Right ventricle myocardium inferior (tissue), 1 donor: ENCODE measurements at regions of chr7 and their contacts with region 1.

Region 1: GRCh38 chr7:141533149-141533949 is 17.9 kb upstream of the AGK start:
- DNase-seq: no peak
- ATAC-seq: peak; percentile 79

Region 2: DNA sequence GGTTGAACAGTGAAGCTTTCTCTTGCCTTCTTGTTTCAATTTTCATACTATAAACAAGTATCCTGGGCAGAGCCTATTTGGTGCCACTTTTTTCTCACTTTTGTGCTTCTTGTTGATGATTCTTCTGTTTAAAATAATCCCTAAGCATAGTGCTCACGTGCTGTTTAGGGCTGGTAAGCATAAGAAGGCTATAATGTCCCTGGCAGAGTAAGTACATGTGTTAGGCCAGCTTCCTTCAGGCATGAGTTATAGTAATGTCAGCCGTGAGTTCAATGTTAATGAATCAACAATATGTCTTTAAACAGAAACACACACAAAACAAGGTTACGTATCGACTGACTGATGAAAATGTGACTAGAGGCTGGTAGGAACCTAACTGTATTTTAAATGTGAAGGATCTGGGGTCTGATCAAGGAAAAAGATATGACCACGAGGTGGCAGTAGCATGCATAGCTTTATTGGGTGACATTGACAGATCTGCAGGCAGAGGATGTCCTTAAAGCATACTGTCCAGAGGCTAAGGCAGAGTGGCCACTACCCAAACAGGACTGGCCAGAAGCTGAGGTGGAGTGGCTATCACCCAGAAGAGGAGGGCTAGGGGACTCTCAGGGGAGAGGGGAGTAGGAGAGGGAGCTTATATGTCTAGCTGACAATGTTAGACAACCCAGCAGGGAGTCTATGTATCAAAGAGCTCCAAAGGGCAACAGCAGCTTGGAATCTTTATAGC is 722.4 kb before region 1 on chr7:
- intact Hi-C with region 1: loop called (anchors 5 kb)
- DNase-seq: no peak
- ATAC-seq: peak; percentile 91

Region 3: GRCh38 chr7:141072548-141073172 is 460.7 kb before region 1 on chr7:
- intact Hi-C with region 1: loop called (anchors 5 kb)
- DNase-seq: peak; percentile 73
- ATAC-seq: peak; percentile 67

Region 4: GRCh38 chr7:141288648-141289047 is 244.7 kb before region 1 on chr7:
- intact Hi-C with region 1: loop called (anchors 10 kb)
- DNase-seq: no peak
- ATAC-seq: no peak

Region 5: DNA sequence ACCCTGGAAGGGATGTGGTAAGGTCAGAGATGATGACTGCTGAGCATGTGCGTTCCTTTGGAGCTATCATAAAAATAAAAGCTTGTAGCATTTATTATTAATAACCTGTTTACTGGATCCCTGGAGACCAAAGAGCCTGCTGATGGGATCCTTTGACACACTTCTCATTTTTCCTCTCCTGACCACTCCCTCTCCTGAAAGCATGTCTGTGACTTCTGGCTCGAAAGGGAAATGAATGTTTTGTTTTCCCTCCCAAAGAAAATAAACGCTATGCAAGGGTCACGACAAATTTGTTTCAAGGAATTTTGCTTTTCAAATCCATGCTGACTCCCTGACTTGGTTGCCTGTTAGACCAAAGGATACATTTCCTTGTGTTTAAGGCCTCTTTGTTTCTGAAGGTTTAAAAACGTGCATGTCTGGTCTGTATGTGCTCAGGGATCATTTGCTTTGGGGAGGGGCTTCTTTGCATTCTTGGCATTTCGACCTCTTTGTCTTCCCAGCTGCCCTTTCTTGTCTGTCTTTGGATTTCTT is 167.2 kb before region 1 on chr7:
- intact Hi-C with region 1: loop called (anchors 5 kb)
- DNase-seq: no peak
- ATAC-seq: peak; percentile 76